Gastrocnemius medialis (tissue), 4 donors: ENCODE measurements at regions of chr22 and their contacts with region 1.

Region 1: DNA sequence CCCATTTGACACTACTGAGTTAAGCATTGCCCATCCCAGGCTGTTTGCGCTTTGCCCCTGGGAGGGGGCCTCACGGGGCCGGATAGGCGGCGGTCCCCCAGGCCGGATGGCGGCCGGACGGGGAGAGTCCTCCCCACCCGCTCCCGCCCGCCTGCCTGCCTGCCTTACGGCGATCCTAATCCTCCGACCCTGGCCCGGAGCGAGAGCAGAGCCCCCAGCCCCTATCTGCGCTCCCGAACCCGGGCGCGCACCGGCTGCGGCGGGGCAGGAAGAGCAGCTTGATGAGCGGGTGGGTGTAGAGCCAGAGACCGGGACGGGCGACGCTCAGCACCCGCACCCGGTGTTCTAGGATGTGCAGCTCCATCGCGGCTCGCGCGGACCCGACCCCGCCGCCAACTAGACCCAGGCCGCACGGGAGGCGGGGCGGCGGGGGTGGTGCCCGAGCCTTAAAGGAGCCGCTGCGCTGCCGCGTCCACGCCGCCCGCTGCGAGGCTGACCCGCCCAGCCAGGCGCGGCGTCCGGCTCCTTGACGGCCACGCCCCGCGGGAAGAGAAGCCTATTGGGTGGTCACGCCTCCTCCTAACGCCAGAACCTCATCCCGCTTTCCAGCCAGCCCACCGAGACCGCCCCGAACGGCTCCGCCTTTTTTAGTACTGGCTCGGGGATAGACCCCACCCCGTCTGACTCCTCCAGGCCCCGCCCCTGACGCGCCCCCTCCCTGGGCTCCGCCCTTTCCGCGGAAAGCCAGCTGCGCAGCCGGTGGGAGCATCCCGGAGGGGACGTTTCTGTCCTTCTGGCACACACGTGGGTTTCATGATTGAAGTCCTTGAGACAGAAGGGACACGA is at the start of gene CASTOR1:
- DNase-seq: peak; percentile 98
- ATAC-seq: peak; percentile 90 to 91
- H3K4me3 ChIP-seq: peak within 1 kb of the TSS; percentile 74 to 97 (median 90)
- H3K27ac ChIP-seq: peak within 1 kb of the TSS; percentile 84 to 90 (median 87)
- H3K4me1 ChIP-seq: peaks cover 22 to 26% of the 10 kb centered on the region in 2 donors
- H3K27me3 ChIP-seq: no peaks in the 10 kb centered on the region
- CTCF ChIP-seq: no peak
- POLR2A ChIP-seq: peak; percentile 57 to 77
- total RNA-seq, gene CASTOR1: 3.5 to 6.5 (median 5.6) TPM

Region 2: DNA sequence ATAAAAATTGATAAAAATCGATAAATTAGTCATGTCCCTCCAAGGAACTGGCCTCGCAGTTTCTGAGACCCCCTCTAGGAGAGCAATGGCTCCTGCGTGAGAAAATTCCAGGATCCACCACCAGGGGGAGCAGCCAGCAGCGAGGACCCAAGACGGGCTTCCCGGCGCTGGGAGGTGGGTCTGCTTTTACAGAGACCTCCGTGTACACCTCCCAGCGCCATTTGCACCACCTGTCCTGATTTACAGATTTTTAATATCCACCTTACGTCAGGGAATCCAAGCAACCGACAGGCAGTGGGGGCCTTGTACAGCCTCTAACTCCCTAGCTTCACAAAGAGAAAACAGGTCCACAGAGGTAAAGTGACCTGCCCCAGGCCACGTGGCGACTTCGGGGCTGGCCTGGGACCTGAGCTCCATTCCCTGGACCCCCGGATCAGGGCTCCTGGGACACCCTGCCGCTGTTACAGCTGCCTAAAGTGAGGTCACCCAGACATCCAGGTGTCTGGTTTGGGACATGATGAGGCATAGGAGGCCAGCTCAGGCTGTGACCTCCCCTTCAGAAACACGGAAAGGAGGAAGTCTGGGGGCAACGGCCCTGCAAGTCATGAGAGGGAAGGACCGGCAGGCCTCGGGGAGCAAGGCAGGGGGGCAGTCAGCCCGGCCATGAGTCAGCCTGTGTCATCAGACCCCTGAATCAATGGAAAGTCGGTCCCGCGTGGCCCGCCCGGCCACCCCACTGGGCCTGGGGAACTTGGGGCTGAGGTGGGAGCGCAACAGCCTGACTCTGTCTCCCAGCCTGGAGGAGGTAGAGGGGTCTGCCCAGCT is 26.2 kb before region 1 on chr22:
- in situ Hi-C with region 1: no loop called
- intact Hi-C with region 1: loop called (anchors 2 kb)
- DNase-seq: peak; percentile 39 to 50
- ATAC-seq: peak; percentile 55 to 62
- H3K4me3 ChIP-seq: peak overlapping the region; percentile 10 to 46 (median 22)
- H3K27ac ChIP-seq: no peak overlapping the region
- H3K4me1 ChIP-seq: no peaks in the 10 kb centered on the region
- H3K27me3 ChIP-seq: no peaks in the 10 kb centered on the region
- CTCF ChIP-seq: peak; percentile 92 to 97 (median 95)
- POLR2A ChIP-seq: no peak

Region 3: DNA sequence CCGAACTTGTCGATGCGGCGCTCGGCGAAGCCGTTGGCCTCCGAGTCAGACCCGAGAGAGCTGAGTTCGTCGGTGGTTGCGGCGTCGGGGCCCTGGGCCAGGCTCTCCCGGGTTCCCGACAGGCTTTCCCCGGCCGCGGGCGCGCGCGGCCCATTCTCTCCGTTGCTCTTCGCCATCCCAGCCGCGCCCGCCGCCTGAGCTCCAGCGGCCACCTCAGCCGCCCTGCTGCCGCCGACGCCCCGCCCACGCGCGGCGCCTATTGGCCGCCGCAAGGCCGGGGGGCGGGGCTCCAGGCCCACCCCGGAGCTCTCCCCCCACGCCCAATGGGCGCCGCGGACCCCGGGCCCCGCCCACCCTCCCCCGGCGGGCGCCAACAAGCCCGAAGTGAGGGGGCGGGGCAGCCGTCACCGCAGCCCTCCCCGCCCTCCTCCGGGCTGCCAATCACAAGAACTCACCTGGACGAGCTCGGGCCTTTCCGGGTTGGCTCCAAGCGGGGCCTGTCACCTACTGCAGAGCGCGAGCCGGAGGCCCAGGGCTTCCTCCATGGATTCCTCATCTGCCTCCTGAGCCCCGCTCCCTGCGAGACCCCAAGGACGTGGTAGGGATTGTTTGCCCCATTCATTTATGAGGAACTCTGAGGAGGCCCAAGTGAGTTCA is 37.5 kb after region 1 on chr22 and contains the start of gene TBC1D10A:
- in situ Hi-C with region 1: no loop called
- intact Hi-C with region 1: loop called (anchors 1 kb)
- DNase-seq: peak; percentile 73 to 88
- ATAC-seq: peak; percentile 84 to 92
- H3K4me3 ChIP-seq: peak within 1 kb of the TSS; percentile 83 to 99 (median 87)
- H3K27ac ChIP-seq: peak within 1 kb of the TSS; percentile 81 to 84 (median 82)
- H3K4me1 ChIP-seq: peaks cover 21 to 30% of the 10 kb centered on the region in 2 donors
- H3K27me3 ChIP-seq: no peaks in the 10 kb centered on the region
- CTCF ChIP-seq: no peak
- POLR2A ChIP-seq: peak; percentile 75 to 84
- total RNA-seq, gene TBC1D10A: 4.1 to 9.6 (median 6.2) TPM

Region 4: GRCh38 chr22:30340911-30341685 is 51.7 kb after region 1 on chr22:
- in situ Hi-C with region 1: no loop called
- intact Hi-C with region 1: no loop called
- DNase-seq: peak; percentile 24 to 86
- ATAC-seq: peak; percentile 44 to 70
- H3K4me3 ChIP-seq: no peak overlapping the region
- H3K27ac ChIP-seq: peak overlapping the region in 3 of 4 donors; percentile 34 to 70 (median 48)
- H3K4me1 ChIP-seq: peaks cover 28 to 38% of the 10 kb centered on the region in 2 donors
- H3K27me3 ChIP-seq: no peaks in the 10 kb centered on the region
- CTCF ChIP-seq: no peak
- POLR2A ChIP-seq: no peak

Region 5: DNA sequence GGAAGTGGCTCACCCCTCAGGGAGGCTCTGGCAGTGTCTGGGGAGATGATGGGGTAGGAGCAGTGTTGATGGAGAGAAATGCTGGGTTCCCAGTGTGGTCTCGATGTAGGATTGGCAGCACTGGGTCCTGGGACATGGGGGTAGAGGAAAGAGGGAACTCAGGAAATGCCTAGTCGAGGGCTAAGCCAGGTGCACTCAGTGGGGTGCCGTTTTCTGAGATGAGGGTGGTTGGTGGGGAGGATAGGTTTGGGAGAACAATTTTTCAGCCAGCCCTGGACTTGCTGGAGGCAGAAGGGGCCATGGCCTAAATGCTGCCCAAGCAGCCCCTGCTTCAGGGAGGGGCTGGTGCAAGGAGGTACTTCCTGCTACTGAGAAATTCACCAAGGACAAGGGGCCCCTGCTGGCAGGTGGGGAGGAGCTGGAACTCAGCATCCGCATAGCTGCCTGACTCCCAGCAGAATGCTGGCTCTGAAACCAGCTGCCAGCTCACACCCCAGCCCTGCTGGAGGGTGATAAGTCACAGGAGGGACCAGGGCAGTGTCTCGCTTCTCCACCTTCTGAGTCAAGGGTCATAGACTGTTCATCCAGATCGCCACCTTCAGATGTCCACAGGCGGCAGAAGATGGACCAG is 73.4 kb after region 1 on chr22:
- in situ Hi-C with region 1: loop called in 1 of 4 experiments (anchors 10 kb)
- intact Hi-C with region 1: no loop called
- DNase-seq: no peak
- ATAC-seq: no peak
- H3K4me3 ChIP-seq: no peak overlapping the region
- H3K27ac ChIP-seq: no peak overlapping the region
- H3K4me1 ChIP-seq: peaks cover 0 to under 1% of the 10 kb centered on the region in 2 donors
- H3K27me3 ChIP-seq: no peaks in the 10 kb centered on the region
- CTCF ChIP-seq: no peak
- POLR2A ChIP-seq: no peak

Region 6: DNA sequence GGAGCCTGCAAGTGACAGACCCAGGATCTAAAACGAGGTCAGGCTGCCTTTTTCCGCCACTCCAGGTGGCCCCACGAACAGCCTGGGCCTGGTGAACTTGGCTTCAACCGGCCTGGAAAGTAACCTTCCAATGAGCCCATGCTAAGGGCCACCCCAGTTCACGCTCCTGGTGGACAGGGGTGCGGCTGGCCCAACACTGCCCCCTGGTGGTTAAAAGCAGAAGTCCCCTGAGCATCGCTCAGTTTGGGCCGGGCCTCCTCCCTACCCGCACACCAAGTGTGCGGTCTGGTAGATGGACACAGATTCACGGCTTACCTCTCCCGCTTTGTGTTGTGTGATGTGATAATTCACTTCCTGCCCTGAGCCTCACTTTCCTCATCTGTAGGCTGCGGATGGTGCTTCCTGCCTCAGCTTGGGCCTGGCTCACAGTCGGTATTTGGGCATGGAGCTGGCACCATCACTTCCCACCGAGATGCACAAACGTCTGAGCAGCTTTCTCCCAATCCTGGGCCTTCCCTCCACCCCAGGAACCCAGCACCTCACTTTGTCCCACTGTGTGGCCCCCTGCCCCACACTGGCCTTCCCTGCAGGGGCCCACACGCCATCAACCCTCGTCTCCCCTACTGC is 196.1 kb after region 1 on chr22:
- in situ Hi-C with region 1: no loop called
- intact Hi-C with region 1: loop called (anchors 10 kb)
- DNase-seq: peak; percentile 9 to 44
- ATAC-seq: peak; percentile 58 to 73
- H3K4me3 ChIP-seq: no peak overlapping the region
- H3K27ac ChIP-seq: no peak overlapping the region
- H3K4me1 ChIP-seq: no peaks in the 10 kb centered on the region
- H3K27me3 ChIP-seq: peaks cover 0 to 2% (median 0%) of the 10 kb centered on the region in 3 donors
- CTCF ChIP-seq: peak; percentile 63 to 97 (median 89)
- POLR2A ChIP-seq: no peak